HEK293 (cell line): ENCODE measurements at regions of chr6 and their contacts with region 1.

Region 1: GRCh38 chr6:114304304-114304887 is 38.4 kb downstream of the HS3ST5 start:
- H3K4me3 ChIP-seq: no peak overlapping the region
- H3K27ac ChIP-seq: no peak overlapping the region
- H3K4me1 ChIP-seq: no peaks in the 10 kb centered on the region
- CTCF ChIP-seq: no peak

Region 2: GRCh38 chr6:114096561-114097172 is 207.7 kb before region 1 on chr6:
- CTCF ChIA-PET with region 1: interaction called, 23 read pairs
- POLR2A ChIA-PET with region 1: no interaction called
- H3K4me3 ChIP-seq: no peak overlapping the region
- H3K27ac ChIP-seq: no peak overlapping the region
- H3K4me1 ChIP-seq: no peaks in the 10 kb centered on the region
- CTCF ChIP-seq: no peak

Region 3: DNA sequence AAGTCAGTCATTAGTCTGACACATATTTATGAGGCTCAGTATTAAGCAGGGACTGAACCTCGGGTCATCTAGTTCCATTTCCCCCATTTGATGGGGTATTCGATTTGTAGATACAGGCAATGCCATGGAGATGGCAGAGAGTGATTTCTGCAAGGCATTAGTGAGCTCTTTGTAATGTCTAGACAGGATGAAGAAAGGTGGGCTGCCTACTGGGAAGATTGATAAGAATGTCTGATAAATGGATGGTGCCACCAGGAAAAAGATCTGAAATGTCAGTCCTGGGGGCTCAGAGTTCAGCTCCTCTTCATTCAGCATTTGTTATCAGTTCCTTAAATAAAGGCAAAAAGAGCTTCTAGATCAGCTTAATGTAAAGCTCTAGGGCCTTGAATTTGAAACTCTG is 13.0 kb before region 1 on chr6:
- CTCF ChIA-PET with region 1: interaction called, 41 read pairs
- POLR2A ChIA-PET with region 1: no interaction called
- H3K4me3 ChIP-seq: no peak overlapping the region
- H3K27ac ChIP-seq: no peak overlapping the region
- H3K4me1 ChIP-seq: no peaks in the 10 kb centered on the region
- CTCF ChIP-seq: no peak

Region 4: GRCh38 chr6:114364289-114364688 is 59.9 kb after region 1 on chr6:
- CTCF ChIA-PET with region 1: no interaction called
- POLR2A ChIA-PET with region 1: no interaction called
- H3K4me3 ChIP-seq: no peak overlapping the region
- H3K27ac ChIP-seq: no peak overlapping the region
- H3K4me1 ChIP-seq: no peaks in the 10 kb centered on the region
- CTCF ChIP-seq: no peak